ENCODE measurements at regions of chr5 and their contacts with region 1.

Region 1: GRCh38 chr5:34915139-34915855 is at the starts of genes BRIX1 and RAD1:
- DNase-seq: peak; percentile 79 to 95 (median 91)
- ATAC-seq: peak; percentile 96 to 97
- H3K4me3 Mint-ChIP-seq: peak within 1 kb of the TSS in 7 of 10 donors; percentile 6 to 70 (median 61)
- H3K27ac Mint-ChIP-seq: peak within 1 kb of the TSS in 2 of 10 donors; percentile 46 to 85
- H3K4me1 Mint-ChIP-seq: peaks cover 13 to 34% (median 27%) of the 10 kb centered on the region in 4 donors
- H3K27me3 Mint-ChIP-seq: no peaks in the 10 kb centered on the region
- polyA plus RNA-seq, gene BRIX1: 43.4 to 49.9 (median 45.5) TPM
- polyA plus RNA-seq, gene RAD1: 18.8 to 19.9 (median 19.4) TPM

Region 2: GRCh38 chr5:34674187-34674586 is 241.1 kb before region 1 on chr5:
- POLR2A ChIA-PET with region 1: no interaction called
- DNase-seq: no peak
- ATAC-seq: no peak
- H3K4me3 Mint-ChIP-seq: no peak overlapping the region
- H3K27ac Mint-ChIP-seq: no peak overlapping the region
- H3K4me1 Mint-ChIP-seq: no peaks in the 10 kb centered on the region
- H3K27me3 Mint-ChIP-seq: peaks cover 0 to 9% (median 2%) of the 10 kb centered on the region in 5 donors

Region 3: DNA sequence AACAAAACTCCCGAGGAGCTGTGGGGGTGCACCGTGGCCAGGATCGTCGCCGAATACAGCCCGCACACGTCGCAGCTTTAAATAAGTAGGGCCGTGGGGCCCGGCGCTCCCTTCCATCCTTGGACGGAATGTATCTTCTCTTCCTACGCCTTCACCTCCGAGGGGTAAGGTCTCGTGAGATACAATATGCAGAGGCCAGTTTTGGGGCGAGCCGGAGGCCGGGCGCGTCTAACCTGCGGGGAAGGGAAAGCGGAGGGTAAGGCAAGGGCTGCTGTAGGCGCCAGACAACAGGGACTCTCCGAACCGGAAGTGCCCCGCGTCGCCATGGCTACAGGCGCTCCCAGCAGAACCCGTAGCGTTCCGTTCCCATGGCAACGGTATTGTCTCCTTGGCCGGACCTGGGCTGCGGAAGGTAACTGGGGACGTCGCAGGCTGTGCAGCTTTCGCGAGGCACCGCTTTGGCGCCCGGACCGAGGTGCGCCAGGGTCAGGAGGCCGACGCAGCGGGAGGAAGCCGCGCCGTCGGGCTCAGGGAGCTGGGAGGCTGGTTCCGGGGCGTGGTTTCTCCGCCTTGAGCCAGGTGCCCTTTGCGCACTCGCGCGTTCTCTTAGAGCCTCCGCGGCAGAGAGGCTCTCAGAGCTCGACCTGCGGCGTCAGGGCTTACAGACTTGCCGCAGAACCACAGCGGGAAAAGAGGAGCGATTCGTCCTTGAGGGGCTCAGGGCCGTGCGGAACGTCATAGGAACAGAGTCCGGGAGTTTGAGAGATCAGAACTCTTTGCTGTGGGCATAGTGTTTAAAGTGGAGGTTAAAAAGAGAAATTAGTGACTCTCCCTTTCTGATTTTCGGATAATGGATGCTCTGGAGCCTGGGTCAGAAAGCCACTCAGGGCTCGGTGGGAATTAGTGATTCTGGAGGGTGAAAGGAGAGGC is 76.2 kb before region 1 on chr5 and contains the start of gene TTC23L:
- POLR2A ChIA-PET with region 1: interaction called, 21 read pairs
- DNase-seq: peak; percentile 79 to 97 (median 89)
- ATAC-seq: peak; percentile 90 to 94
- H3K4me3 Mint-ChIP-seq: peak within 1 kb of the TSS; percentile 87 to 98 (median 95)
- H3K27ac Mint-ChIP-seq: peak within 1 kb of the TSS; percentile 91 to 99 (median 97)
- H3K4me1 Mint-ChIP-seq: peaks cover 3 to 19% (median 16%) of the 10 kb centered on the region in 4 donors
- H3K27me3 Mint-ChIP-seq: peaks cover 0 to 5% (median 3%) of the 10 kb centered on the region in 5 donors
- polyA plus RNA-seq, gene TTC23L: not detected

Region 4: DNA sequence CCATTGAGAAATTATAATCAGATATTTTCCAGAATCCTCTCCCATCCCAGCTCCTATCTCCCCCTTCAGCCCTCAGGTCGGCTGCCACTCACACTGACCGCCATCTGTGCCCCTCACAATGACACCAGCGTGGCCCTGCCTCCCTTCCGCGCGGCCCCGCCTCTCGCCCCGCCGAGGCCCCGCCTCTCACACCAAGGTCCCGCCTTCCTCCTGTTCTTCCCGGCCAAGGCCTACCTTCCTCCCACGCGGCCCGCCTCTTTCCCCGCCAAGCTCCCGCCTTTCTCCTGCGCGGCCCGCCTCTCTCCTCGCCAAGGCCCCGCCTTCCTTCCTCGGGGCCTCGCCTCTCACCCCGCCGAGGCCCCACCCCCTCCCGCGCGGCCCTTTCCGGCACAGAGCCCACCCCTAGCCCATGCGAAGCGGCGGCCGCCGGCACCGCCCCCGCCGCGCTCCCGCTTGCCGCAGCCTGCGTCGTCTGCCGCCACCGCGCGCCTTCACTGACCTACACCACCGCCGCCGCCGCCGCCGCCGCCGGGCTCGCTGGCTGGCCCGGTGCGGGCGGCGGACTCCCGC is 13.9 kb after region 1 on chr5 and contains the start of gene DNAJC21:
- POLR2A ChIA-PET with region 1: interaction called, 111 read pairs
- DNase-seq: peak; percentile 92 to 98 (median 97)
- ATAC-seq: peak; percentile 84 to 87
- H3K4me3 Mint-ChIP-seq: peak within 1 kb of the TSS; percentile 94 to 98 (median 97)
- H3K27ac Mint-ChIP-seq: peak within 1 kb of the TSS; percentile 76 to 98 (median 96)
- H3K4me1 Mint-ChIP-seq: peaks cover 21 to 40% (median 35%) of the 10 kb centered on the region in 4 donors
- H3K27me3 Mint-ChIP-seq: no peaks in the 10 kb centered on the region
- polyA plus RNA-seq, gene DNAJC21: 14.6 to 27.6 (median 21.8) TPM